MCF 10A (cell line): ENCODE measurements at regions of chr6 and their contacts with region 1.

Region 1: DNA sequence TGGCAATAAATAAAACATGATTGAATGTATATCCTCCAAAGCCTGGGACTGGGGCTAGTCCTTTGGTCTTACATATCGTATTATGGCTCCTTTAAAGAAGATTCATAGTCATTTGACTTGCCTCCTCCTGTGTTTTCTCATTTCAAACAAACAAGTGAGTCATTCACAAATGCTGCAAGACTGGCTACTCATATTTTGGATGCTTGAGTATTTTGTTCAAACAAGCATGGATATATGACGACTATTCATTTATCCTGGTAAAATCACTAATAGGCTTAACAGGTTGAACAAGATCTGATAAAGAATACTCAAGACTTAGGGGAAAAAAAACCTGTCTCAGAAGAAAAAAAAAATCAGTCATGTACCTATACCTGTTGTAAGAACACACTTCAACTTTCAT is 111.1 kb upstream of the CCDC28A start:
- DNase-seq: peak; percentile 69
- H3K4me3 Mint-ChIP-seq: peak overlapping the region; percentile 11
- H3K27ac Mint-ChIP-seq: peak overlapping the region; percentile 47
- H3K4me1 Mint-ChIP-seq: no peaks in the 10 kb centered on the region
- H3K27me3 Mint-ChIP-seq: no peaks in the 10 kb centered on the region
- CTCF ChIP-seq: no peak

Region 2: DNA sequence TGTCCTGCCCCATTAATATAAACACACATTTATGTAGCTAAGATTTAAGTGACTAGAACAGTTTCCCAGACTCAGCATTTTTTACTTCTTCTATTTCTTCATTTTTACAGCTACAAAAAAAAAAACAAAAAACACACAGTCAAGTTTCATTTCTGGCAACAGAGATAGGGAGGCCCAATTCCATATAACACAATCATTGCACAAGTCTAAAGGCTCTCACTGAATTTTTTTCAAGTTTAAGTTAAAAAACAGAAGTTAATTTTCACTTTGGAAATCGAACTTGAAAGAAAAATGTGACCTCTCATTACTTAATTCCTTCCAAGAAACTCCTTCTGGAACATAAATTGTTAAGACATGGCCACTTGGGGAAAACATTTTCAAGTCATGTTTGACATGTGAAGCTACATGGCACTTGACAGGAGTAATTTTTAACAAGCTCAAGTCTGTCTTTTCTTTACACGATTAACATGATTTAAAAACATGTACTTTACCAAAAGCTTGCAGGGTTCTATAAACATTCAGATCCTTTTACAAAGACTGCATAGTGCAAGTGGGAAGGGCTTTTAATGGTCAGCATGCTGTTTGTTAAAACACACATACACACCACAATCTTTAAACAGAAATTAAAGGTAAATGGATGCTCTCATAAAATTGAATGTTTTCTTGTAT is 11.0 kb after region 1 on chr6:
- CTCF ChIA-PET with region 1: interaction called, 7 read pairs
- POLR2A ChIA-PET with region 1: interaction called, 13 read pairs
- intact Hi-C with region 1: no loop called
- DNase-seq: no peak
- H3K4me3 Mint-ChIP-seq: peak overlapping the region; percentile 8
- H3K27ac Mint-ChIP-seq: peak overlapping the region; percentile 54
- H3K4me1 Mint-ChIP-seq: peaks cover 8% of the 10 kb centered on the region
- H3K27me3 Mint-ChIP-seq: no peaks in the 10 kb centered on the region
- CTCF ChIP-seq: no peak

Region 3: GRCh38 chr6:138682704-138683527 is 20.4 kb after region 1 on chr6:
- CTCF ChIA-PET with region 1: interaction called, 3 read pairs
- POLR2A ChIA-PET with region 1: interaction called, 103 read pairs
- intact Hi-C with region 1: no loop called
- DNase-seq: peak; percentile 86
- H3K4me3 Mint-ChIP-seq: peak overlapping the region; percentile 72
- H3K27ac Mint-ChIP-seq: peak overlapping the region; percentile 98
- H3K4me1 Mint-ChIP-seq: peaks cover 5% of the 10 kb centered on the region
- H3K27me3 Mint-ChIP-seq: no peaks in the 10 kb centered on the region
- CTCF ChIP-seq: no peak